ENCODE measurements at regions of chr12 and their contacts with region 1.

Region 1: DNA sequence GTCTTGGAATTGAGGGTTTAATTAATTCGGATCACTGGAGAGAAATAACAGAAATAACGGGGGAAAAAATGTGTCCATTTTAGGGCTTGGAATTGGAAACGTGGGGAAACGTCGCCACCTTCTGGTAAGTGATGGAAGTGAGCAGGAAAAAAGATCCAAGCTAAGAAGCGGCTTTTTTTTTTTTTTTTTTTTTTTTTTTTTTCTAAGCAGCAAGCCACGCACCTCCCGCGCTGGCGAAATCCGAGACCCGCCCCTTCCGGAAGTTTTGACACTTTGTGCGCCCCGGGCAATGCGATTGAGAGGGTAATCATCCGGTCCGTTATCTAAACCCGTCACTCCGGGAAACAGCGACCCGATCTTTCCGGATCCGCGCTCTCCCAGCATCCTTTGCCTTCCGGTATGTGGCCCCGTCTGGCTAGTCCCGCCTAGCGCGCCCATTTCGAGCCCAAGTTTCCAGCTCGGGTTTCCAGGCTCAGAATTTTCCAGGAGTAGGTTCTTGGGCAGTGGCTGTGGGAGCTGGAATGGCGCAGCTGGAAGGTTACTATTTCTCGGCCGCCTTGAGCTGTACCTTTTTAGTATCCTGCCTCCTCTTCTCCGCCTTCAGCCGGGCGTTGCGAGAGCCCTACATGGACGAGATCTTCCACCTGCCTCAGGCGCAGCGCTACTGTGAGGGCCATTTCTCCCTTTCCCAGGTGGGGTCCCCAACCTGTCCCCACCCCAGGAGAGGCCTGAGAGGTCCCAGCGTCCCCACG is at the start of gene ALG10:
- DNase-seq: peak; percentile 88 to 98
- H3K4me3 ChIP-seq: peak within 1 kb of the TSS; percentile 66 to 71
- H3K27ac ChIP-seq: peak within 1 kb of the TSS; percentile 80 to 84
- H3K4me1 ChIP-seq: peaks cover 0 to 4% of the 10 kb centered on the region in 2 donors
- H3K27me3 ChIP-seq: no peaks in the 10 kb centered on the region
- CTCF ChIP-seq: peak; percentile 55 to 72 (median 71)
- total RNA-seq, gene ALG10: 1.3 TPM

Region 2: GRCh38 chr12:32679091-32679919 is 1343.0 kb before region 1 on chr12 and contains the start of gene DNM1L:
- intact Hi-C with region 1: loop called (anchors 1 kb)
- DNase-seq: peak; percentile 81 to 97
- H3K4me3 ChIP-seq: peak within 1 kb of the TSS; percentile 82 to 84
- H3K27ac ChIP-seq: peak within 1 kb of the TSS; percentile 93 to 94
- H3K4me1 ChIP-seq: peaks cover 0 to 5% of the 10 kb centered on the region in 2 donors
- H3K27me3 ChIP-seq: no peaks in the 10 kb centered on the region
- CTCF ChIP-seq: no peak
- total RNA-seq, gene DNM1L: 50.9 TPM

Region 3: DNA sequence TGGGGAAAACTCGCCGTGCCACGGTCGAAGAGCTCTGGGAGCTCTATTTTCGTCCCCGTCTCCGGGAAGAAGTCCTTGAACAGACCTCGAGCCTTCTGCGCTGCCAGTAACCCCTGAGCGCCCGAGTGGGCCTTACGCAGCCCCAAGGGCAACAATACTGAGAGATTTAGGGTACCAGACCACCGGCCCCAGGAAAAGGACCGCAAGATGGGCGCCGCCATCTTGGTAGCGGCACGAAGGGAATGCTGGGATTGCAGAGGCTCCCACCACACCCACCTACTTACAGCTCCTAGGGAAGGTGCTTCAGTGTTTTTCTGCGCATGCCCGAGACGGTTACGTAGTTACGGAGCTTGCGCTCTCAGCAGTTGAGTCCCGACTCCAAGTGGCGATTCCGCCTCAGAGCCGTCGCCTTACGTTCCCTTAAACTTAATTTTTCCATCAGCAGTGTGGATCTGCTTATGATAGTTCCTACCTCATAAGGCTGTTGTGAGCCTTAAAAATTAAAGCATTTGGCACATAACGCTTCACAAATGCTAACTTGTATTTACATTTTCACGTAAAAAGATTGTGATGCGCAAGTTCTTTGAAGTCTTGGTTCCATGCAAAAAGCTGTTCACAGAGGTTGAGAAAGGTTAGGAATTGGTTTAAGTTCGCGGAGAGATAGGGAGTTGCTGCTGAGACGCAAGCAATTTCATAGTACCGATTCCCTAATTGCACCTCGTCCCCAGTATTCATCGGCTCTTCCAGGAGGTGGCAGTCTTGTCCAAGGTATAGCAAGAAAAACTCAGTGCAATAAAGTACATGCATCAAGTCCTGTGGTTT is 1266.4 kb before region 1 on chr12 and contains the start of gene YARS2:
- intact Hi-C with region 1: loop called (anchors 1 kb)
- DNase-seq: peak; percentile 75 to 97
- H3K4me3 ChIP-seq: peak within 1 kb of the TSS; percentile 95 to 99
- H3K27ac ChIP-seq: peak within 1 kb of the TSS; percentile 91 to 93
- H3K4me1 ChIP-seq: peaks cover 0 to 11% of the 10 kb centered on the region in 2 donors
- H3K27me3 ChIP-seq: no peaks in the 10 kb centered on the region
- CTCF ChIP-seq: peak; percentile 78 to 82 (median 80)
- total RNA-seq, gene YARS2: 15.8 TPM

Region 4: DNA sequence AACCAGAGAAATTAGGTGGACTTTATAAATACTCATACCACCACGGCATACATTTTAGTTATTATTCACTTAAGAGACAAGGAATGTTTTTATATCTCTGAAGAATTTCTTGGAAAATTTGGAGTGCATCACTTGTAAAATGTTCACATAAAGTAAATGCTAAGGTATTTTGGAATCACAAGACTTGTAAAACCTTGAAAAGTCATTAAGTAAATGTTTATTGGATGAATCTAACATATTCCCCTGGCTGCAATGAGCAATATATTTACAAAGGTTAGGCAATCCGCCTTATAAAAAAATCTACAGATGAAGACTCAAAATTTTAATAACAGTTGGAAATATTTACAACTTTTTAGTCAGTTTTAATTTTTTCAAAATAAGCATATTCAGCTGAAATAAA is 287.4 kb before region 1 on chr12:
- intact Hi-C with region 1: no loop called
- DNase-seq: no peak
- H3K4me3 ChIP-seq: no peak overlapping the region
- H3K27ac ChIP-seq: no peak overlapping the region
- H3K4me1 ChIP-seq: no peaks in the 10 kb centered on the region
- H3K27me3 ChIP-seq: no peaks in the 10 kb centered on the region
- CTCF ChIP-seq: no peak